Dendritic cell treated with granulocyte-macrophage colony-stimulating factor and Interleukin-4, amounts not matched to agents 40 ng/mL and 50 ng/mL, for 4 days (primary cell): ENCODE measurements at regions of chr7 and their contacts with region 1.

Region 1: GRCh38 chr7:88278882-88279281 is 27.8 kb downstream of the STEAP4 start:
- H3K4me3 Mint-ChIP-seq: no peak overlapping the region
- H3K27ac Mint-ChIP-seq: peak overlapping the region; percentile 30
- H3K4me1 Mint-ChIP-seq: peaks cover 17% of the 10 kb centered on the region
- H3K27me3 Mint-ChIP-seq: no peaks in the 10 kb centered on the region

Region 2: DNA sequence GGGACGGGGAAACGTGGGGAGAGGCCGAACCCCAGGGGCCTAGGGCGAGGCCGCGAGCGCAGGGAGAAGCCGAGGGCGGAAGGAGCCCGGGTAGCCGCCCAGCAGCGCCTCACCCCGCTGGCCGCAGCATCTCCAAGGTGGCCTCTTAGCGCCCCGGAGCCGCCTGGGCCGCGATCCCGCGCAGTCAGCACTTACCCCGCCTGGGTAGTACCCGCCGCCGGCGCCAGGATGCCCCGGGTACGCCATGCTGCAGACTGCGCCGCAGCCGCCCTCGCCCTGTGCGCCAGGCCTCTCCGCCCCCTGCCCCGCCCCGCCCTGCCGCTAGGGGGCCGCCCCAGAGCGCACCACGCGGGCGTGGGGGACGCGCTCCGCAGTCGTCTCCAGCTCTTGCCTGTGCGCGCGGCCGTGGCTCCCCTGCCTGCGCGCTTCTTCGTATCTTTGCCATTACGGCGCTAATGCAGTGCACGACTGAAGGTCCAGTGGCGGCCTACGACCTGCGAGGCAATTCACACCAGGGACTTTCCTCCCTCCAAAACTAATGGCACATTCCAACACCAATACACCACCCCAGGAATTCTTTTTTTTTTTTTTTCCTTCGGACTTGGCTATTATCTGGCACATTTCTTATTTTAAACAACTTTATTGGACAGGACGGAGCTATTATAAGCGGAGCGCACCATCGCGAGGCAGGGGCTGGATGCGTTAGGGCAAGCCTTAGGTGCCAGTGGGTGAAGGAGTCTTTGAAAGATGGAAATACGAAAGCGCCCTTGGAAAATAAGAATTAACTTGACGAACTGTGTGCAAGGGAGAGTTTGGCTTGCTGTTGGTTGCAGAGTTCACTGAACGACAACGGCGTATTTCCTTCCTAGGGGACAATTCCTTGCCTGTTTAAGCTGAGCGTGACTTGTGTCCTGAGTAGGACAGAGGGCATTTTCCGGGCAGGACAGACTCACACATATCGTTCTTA is 58.8 kb before region 1 on chr7 and contains the start of gene SRI:
- intact Hi-C with region 1: no loop called
- H3K4me3 Mint-ChIP-seq: peak within 1 kb of the TSS; percentile 80
- H3K27ac Mint-ChIP-seq: peak within 1 kb of the TSS; percentile 95
- H3K4me1 Mint-ChIP-seq: peaks cover 25% of the 10 kb centered on the region
- H3K27me3 Mint-ChIP-seq: no peaks in the 10 kb centered on the region

Region 3: GRCh38 chr7:88322151-88322550 is 43.3 kb after region 1 on chr7:
- intact Hi-C with region 1: loop called (anchors 5 kb)
- H3K4me3 Mint-ChIP-seq: no peak overlapping the region
- H3K27ac Mint-ChIP-seq: peak overlapping the region; percentile 82
- H3K4me1 Mint-ChIP-seq: peaks cover 56% of the 10 kb centered on the region
- H3K27me3 Mint-ChIP-seq: no peaks in the 10 kb centered on the region